ENCODE measurements at regions of chr1 and their contacts with region 1.

Region 1: DNA sequence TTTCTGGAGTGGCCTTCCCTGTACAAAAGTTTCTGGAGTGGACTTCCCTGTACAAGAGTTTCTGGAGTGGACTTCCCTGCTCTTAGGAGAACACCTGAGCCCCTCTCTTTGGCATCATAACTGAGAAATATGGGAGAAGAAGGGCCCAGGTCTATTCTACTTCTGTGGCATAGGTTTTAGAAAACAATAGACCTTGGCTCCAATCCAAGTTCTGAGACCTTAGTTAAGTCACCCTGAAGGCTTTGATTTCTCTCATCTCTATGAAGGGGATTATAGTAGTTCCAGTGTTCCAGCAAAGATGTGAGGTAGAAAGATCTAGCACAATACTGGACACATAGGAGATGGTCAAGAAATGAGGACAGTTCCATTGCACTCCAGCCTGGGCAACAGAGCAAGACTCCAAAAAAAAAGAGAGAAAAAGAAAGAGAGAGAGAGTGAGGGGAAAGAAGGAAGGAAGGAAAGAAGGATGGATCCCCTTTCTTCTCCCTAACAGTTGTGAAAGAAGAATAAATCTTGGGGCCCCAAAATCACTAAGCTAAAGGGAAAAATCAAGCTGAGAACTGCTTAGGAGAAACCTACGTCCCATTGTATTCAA is 13.3 kb upstream of the EIF4G3 start:
- DNase-seq: no peak
- ATAC-seq: no peak

Region 2: GRCh38 chr1:20871419-20871818 is 318.6 kb before region 1 on chr1:
- intact Hi-C with region 1: loop called in 1 of 2 experiments (anchors 10 kb)
- DNase-seq: no peak
- ATAC-seq: no peak

Measured in left cardiac atrium (tissue), 4 donors.